CD8-positive, alpha-beta T cell (primary cell): ENCODE measurements at regions of chr14 and their contacts with region 1.

Region 1: DNA sequence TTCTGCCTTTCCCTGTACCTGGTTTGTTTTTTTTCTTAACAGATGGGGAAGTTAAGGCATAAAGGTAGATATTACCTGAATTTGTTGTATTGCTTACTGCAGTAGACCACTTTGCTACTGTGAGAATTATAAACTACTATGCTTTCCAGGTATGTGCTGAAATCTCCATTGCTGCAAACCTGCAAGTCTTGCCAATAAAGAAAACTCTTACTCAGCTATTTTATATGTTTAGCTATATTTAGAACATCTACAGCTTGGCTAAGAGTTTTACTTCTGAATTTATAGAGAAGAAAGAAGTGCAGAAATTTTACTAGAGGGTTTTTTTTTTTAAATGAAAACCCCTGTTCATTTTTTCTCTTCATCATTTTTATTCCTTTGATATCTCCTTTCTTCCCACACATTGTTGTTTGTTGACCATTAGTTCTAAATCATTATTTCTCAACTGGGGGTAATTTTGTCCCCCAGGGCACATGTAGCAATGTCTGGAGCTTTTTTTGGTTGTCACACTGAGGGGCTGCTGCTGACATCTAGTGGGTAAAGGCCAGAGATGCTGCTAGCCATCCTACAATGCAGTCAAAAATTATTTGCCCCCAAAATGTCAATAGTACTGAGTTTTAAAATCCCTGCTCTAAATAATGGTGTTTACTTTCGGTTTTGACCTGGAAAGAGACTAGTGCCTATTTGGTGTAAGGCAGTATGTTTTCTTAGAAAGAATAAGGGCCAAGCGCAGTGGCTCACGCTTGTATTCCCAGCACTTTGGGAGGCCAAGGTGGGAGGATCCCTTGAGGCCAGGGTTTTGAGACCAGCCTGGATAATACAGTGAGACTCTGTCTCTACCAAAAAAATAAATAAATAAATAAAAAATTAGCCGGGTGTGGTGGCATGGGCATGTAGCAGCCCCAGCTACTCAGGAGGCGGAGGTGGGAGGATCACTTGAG is 48.6 kb downstream of the PCNX1 start:
- DNase-seq: peak; percentile 10 to 78 (median 55)
- ATAC-seq: peak; percentile 94
- H3K4me3 ChIP-seq: no peak overlapping the region
- H3K4me3 Mint-ChIP-seq: no peak overlapping the region
- H3K27ac ChIP-seq: no peak overlapping the region
- H3K27ac Mint-ChIP-seq: no peak overlapping the region
- H3K4me1 ChIP-seq: peaks cover 20% of the 10 kb centered on the region
- H3K4me1 Mint-ChIP-seq: peaks cover 35% of the 10 kb centered on the region
- H3K27me3 ChIP-seq: no peaks in the 10 kb centered on the region
- H3K27me3 Mint-ChIP-seq: no peaks in the 10 kb centered on the region
- CTCF ChIP-seq: peak; percentile 90

Region 2: DNA sequence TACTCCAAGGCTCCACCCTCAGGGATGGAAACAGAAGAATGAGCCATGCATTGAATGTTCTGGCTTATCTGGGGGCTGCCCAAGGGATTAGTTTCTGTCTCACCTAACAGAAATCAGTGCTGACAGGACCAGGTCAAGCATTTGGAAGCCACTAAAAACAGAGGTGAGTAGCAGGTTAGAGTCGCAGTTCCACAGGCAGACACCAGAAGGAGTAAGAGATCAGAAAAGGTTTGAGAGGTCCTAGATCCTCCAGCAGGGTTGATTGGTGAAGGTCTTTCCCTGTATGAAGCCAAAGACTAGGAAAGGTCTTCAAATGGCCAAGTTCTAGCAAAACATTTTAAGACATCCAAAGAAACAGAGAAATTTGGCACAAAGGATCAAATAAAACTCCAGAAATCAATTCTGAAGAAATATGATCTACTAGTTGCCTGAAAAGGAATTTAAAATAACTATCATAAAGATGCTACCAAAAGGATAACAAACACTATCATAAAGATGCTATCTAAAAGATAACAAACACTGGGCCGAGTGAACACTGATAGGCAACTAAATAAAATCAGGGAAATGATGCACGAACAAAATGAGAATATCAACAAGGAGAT is 333.6 kb before region 1 on chr14:
- CTCF ChIA-PET with region 1: no interaction called
- POLR2A ChIA-PET with region 1: no interaction called
- intact Hi-C with region 1: loop called in 1 of 2 experiments (anchors 5 kb)
- DNase-seq: peak in 8 of 9 experiments; percentile 31 to 73 (median 62)
- ATAC-seq: peak; percentile 96
- H3K4me3 ChIP-seq: no peak overlapping the region
- H3K4me3 Mint-ChIP-seq: no peak overlapping the region
- H3K27ac ChIP-seq: no peak overlapping the region
- H3K27ac Mint-ChIP-seq: no peak overlapping the region
- H3K4me1 ChIP-seq: no peaks in the 10 kb centered on the region
- H3K4me1 Mint-ChIP-seq: peaks cover 3% of the 10 kb centered on the region
- H3K27me3 ChIP-seq: peaks cover 0 to 2% of the 10 kb centered on the region in 2 experiments
- H3K27me3 Mint-ChIP-seq: no peaks in the 10 kb centered on the region
- CTCF ChIP-seq: peak; percentile 93

Region 3: DNA sequence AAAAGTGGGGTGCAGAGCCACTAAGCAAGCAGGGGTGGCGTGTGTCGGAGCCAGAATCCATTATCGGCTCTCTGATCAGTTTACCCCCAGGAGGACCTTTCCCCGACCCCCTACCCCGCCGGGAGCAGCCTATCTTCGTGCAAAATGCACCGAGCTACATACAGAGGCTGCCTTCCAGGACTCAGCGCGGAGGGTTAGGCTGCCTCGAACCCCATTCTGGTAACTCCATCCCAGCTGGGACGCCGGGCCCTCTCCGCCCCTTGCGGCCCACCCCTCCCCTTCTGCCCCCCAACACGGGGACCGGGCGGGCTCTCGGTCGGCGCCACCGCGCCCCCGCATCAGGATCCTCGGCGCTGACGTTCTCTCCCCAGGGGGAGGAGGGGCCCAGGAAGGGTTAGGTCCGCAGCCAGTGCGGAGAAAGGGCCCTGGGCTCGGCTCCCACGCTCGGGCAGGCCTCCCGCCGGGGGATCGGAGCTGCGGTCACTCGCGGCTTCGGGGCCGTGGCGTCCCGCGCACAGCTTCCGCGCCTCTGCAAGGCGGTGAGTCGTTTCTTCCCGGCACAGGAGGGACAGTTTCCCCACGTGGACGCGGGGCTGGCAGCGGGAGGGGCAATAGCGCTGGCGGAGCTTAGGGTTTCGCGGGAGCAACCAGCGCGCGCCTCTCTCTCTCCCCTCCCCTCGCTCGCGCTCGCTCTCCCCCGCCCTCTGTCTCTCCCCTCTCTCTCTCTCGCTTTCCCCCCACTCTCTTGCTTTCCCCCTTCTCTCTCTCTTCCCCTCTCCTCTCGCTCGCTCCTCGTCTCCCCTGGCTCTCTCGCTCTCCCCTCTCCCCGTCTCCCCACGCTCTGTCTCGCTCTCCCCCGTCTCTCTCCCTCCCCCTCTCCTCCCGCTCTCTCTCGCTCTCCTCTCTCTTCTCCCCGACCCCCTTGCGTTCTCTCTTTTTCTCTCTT is 134.0 kb before region 1 on chr14:
- CTCF ChIA-PET with region 1: interaction called, 54 read pairs
- POLR2A ChIA-PET with region 1: interaction called, 4 read pairs
- intact Hi-C with region 1: loop called (anchors 1 kb)
- DNase-seq: peak in 8 of 9 experiments; percentile 35 to 73 (median 58)
- ATAC-seq: peak; percentile 39
- H3K4me3 ChIP-seq: peak overlapping the region; percentile 57 to 67
- H3K4me3 Mint-ChIP-seq: peak overlapping the region; percentile 76
- H3K27ac ChIP-seq: peak overlapping the region in 1 of 2 experiments; percentile 15
- H3K27ac Mint-ChIP-seq: no peak overlapping the region
- H3K4me1 ChIP-seq: peaks cover 17% of the 10 kb centered on the region
- H3K4me1 Mint-ChIP-seq: peaks cover 16% of the 10 kb centered on the region
- H3K27me3 ChIP-seq: no peaks in the 10 kb centered on the region
- H3K27me3 Mint-ChIP-seq: peaks cover 7% of the 10 kb centered on the region
- CTCF ChIP-seq: no peak

Region 4: DNA sequence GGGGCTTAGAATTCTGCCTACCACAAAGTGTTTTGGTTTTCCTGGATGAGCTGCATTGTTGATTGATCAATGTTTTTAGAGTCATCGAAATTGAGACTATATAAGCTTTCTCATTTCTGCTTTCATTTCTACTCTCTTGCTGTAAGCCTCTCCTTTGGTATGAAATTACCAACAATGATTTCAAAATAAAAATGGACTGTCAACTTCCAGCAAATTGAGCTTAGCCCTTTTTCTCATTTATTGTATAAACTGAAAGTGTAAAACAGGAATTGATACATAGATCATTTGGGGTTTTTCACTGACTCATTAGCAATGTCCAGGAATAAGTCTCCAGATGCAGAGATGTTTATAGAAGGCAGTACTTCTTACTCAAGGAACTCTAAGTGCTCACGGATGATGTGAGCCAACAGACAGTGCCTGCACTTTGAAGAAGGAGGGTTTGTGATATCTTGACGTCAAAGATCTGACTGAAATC is 68.6 kb before region 1 on chr14:
- CTCF ChIA-PET with region 1: interaction called, 12 read pairs
- POLR2A ChIA-PET with region 1: interaction called, 5 read pairs
- intact Hi-C with region 1: no loop called
- DNase-seq: peak in 1 of 9 experiments; percentile 37
- ATAC-seq: peak; percentile 19
- H3K4me3 ChIP-seq: peak overlapping the region in 1 of 2 experiments; percentile 21
- H3K4me3 Mint-ChIP-seq: peak overlapping the region; percentile 58
- H3K27ac ChIP-seq: peak overlapping the region in 1 of 2 experiments; percentile 58
- H3K27ac Mint-ChIP-seq: peak overlapping the region; percentile 69
- H3K4me1 ChIP-seq: peaks cover 67% of the 10 kb centered on the region
- H3K4me1 Mint-ChIP-seq: peaks cover 69% of the 10 kb centered on the region
- H3K27me3 ChIP-seq: no peaks in the 10 kb centered on the region
- H3K27me3 Mint-ChIP-seq: no peaks in the 10 kb centered on the region
- CTCF ChIP-seq: no peak

Region 5: DNA sequence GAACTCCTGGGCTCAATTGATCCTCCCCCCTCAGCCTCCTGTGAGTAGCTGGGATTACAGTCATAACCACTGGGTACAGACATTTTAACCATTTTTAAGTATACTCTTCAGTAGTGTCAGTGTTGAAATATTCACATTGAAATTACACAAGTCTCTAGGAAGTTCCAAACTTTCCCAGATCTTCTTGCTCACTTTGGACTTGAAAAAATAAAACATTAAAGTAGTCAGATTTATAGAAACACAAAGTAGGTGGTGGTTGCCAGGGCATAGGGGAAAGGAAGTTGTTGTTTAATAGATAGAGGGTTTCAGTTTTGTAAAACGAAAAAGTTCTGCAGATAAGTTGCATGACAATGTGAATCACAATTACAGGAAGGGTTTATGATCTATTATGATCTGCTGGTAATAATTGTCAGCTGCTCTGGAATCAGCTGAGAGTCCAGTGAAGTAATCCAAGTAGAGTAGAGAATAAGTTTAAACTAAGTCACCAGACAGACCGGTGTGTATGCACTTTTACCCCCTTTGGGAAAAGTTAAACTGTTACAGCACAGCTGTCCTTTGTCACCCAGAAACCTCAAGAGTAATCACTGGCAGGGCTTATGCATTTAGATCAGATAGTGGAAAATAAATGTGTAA is 21.2 kb before region 1 on chr14:
- CTCF ChIA-PET with region 1: interaction called, 37 read pairs
- POLR2A ChIA-PET with region 1: interaction called, 8 read pairs
- intact Hi-C with region 1: loop called in 1 of 2 experiments (anchors 2 kb)
- DNase-seq: peak in 1 of 9 experiments; percentile 37
- ATAC-seq: peak; percentile 67
- H3K4me3 ChIP-seq: peak overlapping the region in 1 of 2 experiments; percentile 8
- H3K4me3 Mint-ChIP-seq: peak overlapping the region; percentile 66
- H3K27ac ChIP-seq: peak overlapping the region; percentile 18 to 61
- H3K27ac Mint-ChIP-seq: peak overlapping the region; percentile 84
- H3K4me1 ChIP-seq: peaks cover 25% of the 10 kb centered on the region
- H3K4me1 Mint-ChIP-seq: peaks cover 84% of the 10 kb centered on the region
- H3K27me3 ChIP-seq: no peaks in the 10 kb centered on the region
- H3K27me3 Mint-ChIP-seq: no peaks in the 10 kb centered on the region
- CTCF ChIP-seq: no peak

Region 6: DNA sequence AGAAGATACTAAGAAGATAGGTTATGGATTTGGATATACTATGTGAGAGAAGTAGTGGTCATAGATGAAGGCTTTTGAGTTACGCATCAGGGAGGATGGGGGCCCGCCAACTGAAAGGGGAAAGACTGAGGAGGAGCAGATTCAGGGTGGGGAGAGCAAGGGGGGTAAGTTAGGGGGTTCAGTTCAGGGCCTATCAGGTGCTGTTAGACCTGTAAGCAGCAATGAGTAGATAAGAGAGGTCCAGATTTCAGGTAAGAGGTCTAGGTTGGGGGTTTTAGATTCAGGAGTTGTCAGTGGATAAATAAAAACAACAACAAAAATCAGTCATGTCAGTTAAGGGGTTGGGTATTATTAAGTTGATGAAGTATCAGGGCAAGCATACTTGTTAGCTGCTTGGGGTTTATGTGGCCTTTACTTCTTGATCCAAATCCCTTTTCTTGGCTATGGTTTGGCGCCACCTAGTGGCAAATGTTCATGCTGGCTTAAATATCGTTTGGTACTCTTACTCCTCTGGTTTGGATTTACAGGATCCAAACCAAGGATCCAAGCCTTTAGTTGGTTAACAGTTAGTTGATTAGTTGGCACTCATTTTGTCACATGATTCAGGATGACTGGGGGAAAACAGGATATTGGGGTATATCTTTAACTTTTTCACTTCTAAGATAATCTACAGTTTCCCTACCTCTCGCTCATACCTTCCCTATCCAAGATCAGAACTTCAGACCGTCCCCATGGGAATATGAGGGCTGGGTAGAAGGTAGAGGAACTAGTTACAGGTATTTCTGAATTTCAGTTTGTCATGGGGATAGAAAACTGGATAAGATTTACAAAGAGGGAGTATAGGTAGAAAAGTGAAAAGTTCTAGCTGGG is 16.5 kb after region 1 on chr14:
- CTCF ChIA-PET with region 1: interaction called, 12 read pairs
- POLR2A ChIA-PET with region 1: no interaction called
- intact Hi-C with region 1: no loop called
- DNase-seq: peak; percentile 65 to 90 (median 85)
- ATAC-seq: peak; percentile 81
- H3K4me3 ChIP-seq: no peak overlapping the region
- H3K4me3 Mint-ChIP-seq: no peak overlapping the region
- H3K27ac ChIP-seq: peak overlapping the region in 1 of 2 experiments; percentile 0
- H3K27ac Mint-ChIP-seq: peak overlapping the region; percentile 53
- H3K4me1 ChIP-seq: peaks cover 25% of the 10 kb centered on the region
- H3K4me1 Mint-ChIP-seq: peaks cover 48% of the 10 kb centered on the region
- H3K27me3 ChIP-seq: no peaks in the 10 kb centered on the region
- H3K27me3 Mint-ChIP-seq: no peaks in the 10 kb centered on the region
- CTCF ChIP-seq: peak; percentile 81

Region 7: GRCh38 chr14:71031000-71031399 is 75.2 kb after region 1 on chr14:
- CTCF ChIA-PET with region 1: no interaction called
- POLR2A ChIA-PET with region 1: no interaction called
- intact Hi-C with region 1: no loop called
- DNase-seq: no peak
- ATAC-seq: no peak
- H3K4me3 ChIP-seq: no peak overlapping the region
- H3K4me3 Mint-ChIP-seq: no peak overlapping the region
- H3K27ac ChIP-seq: no peak overlapping the region
- H3K27ac Mint-ChIP-seq: peak overlapping the region; percentile 11
- H3K4me1 ChIP-seq: no peaks in the 10 kb centered on the region
- H3K4me1 Mint-ChIP-seq: no peaks in the 10 kb centered on the region
- H3K27me3 ChIP-seq: no peaks in the 10 kb centered on the region
- H3K27me3 Mint-ChIP-seq: no peaks in the 10 kb centered on the region
- CTCF ChIP-seq: no peak